OCI-LY7 (cell line): ENCODE measurements at regions of chr4 and their contacts with region 1.

Region 1: DNA sequence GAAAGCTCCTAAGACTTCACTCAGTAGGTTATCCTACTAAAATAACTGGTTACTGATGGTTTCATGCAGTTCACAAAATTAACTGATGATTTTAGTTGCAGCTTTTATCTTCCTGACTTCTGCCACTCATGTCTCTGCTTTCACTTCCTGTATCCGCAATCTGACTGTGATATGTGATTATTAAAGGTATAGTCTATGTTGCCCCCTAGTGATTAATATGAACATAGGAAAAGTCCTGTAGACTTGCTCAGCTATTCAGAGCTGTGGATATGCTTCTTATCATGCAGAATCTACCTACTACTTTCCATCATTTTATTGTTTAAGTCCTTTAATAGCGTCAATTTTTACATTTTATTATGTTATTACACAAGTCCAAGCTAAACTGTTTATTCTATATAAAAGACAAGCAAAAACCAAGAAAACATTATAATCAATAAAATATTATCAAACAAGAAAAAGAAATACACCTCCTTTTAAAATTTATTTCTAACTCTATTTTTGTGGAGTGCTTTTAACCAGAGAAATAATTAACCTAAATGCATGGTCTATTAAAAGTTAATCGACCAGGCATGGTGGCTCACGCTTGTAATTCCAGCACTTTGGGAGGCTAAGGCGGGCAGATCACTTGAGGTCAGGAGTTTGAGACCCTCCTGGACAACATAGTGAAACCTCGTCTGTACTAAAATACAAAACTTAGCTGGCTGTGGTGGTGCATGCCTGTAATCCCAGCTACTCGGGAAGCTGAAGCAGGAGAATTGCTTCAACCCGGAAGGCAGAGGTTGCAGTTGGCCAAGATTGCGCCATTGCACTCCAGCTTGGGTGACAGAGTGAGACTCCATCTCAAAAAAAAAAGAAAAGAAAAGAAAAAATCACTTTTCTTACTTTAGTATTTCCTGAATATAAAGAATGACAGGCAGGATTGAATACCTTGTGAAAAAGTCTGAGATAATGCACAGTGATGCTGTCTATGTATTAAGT is 40.4 kb upstream of the TLR2 start:
- DNase-seq: peak; percentile 92
- H3K4me3 ChIP-seq: no peak overlapping the region
- H3K27ac ChIP-seq: peak overlapping the region; percentile 50
- H3K4me1 ChIP-seq: peaks cover 33% of the 10 kb centered on the region
- CTCF ChIP-seq: peak; percentile 89

Region 2: DNA sequence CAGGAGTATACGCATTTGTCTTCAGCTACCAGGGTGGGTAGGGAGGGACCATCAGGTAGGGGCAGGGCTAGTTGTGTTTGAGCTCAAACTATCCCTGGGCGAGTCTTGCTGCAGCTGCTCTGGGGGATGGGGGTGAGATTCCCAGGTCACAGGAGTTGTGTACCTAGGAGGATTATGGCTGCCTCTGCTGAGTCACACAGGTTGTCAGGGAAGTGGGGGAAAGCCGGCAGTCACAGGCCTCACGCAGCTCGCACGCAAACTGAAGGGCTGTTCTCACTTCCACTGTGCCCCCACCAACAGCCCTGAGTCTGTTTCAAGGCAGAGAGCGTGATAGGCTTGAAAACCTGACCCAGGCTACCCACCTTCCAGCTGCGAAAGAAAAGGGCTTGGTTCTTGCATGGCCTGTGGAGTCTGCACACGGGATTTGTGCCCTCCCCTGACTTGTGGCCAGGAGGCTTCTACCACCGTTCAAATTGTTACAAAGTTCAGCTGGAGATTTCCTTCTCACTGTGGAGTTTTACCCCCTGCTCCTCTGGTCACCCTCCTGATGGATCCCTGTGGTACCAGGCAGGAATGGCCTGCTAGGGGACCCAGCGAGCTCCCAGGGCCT is 800.1 kb before region 1 on chr4:
- CTCF ChIA-PET with region 1: no interaction called
- POLR2A ChIA-PET with region 1: no interaction called
- intact Hi-C with region 1: loop called (anchors 10 kb)
- DNase-seq: no peak
- H3K4me3 ChIP-seq: no peak overlapping the region
- H3K27ac ChIP-seq: no peak overlapping the region
- H3K4me1 ChIP-seq: no peaks in the 10 kb centered on the region
- CTCF ChIP-seq: no peak

Region 3: DNA sequence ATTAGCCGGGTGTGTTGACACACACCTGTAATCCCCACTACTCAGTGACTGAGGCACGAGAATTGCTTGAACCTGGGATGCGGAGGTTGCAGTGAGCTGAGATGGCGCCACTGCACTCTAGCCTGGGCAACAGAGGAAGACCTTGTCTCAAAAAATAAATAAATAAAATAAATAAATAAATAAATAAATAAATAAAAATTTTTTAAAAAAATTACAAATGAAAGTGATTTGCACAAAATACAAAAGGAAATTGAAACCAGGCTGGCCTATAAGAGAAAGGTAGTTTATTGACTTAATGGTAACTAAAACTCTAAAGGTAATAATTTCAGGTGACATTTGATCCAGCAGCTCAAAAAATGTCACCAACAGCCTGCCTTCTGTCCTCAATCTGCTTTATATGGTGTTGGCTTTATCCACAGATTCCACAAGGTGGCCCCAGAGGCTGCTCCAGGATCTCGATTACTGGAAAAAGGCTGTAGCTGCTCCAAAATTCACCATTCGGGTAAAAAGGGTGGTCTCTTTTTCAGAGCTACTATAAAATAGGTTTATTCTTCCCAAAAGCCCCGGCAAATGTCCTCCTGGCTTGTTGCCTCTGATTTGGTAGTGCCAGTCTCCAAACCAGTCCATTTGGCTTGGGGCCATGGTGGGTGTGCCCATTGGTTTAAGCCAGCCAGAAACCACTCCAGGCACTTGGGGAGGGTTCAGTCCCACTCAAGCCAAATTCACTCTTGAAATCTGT is 500.8 kb before region 1 on chr4:
- CTCF ChIA-PET with region 1: no interaction called
- POLR2A ChIA-PET with region 1: interaction called, 3 read pairs
- intact Hi-C with region 1: loop called (anchors 1 kb)
- DNase-seq: peak; percentile 72
- H3K4me3 ChIP-seq: no peak overlapping the region
- H3K27ac ChIP-seq: no peak overlapping the region
- H3K4me1 ChIP-seq: no peaks in the 10 kb centered on the region
- CTCF ChIP-seq: peak; percentile 87

Region 4: GRCh38 chr4:153249199-153250041 is 394.3 kb before region 1 on chr4:
- CTCF ChIA-PET with region 1: no interaction called
- POLR2A ChIA-PET with region 1: no interaction called
- intact Hi-C with region 1: loop called (anchors 10 kb)
- DNase-seq: peak; percentile 90
- H3K4me3 ChIP-seq: peak overlapping the region; percentile 68
- H3K27ac ChIP-seq: no peak overlapping the region
- H3K4me1 ChIP-seq: peaks cover 12% of the 10 kb centered on the region
- CTCF ChIP-seq: peak; percentile 0; the same call in 1 of the 2 replicates

Region 5: DNA sequence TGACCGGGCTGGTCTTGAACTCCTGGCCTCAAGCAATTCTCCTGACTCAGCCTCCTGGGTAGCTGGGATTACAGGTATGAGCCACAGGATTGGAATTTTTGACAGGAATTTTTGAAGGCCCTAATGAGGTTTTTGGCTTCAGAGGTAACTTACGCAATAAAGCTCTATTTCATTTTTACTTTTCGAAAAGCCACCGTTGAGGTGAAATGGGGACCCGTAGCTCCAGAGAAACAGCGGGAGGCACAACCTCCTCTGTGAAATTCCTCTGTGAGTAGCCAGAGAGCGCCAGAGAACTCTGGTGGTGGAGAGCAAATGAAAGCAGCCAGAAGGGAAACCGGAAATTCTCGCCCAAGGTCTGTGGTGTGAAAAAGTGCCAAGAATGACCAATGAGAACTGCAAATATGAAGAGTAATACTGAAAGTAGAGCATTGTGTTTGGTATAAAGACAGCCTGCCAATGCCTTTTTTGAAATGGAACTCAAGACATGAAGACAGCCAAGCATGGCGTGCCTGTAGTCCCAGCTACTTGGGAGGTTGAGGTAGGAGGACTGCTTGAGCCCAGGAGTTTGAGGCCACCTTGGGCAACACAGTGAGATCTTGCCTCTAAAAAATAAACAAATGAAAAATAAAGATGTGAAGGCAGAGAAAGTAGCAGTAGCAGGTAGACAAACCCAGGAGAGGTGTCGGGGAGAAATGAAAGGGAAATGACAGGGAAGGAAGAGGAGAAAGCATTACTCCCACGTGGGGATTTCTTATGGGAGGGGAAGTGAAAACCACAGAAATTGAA is 210.5 kb before region 1 on chr4:
- CTCF ChIA-PET with region 1: interaction called, 3 read pairs
- POLR2A ChIA-PET with region 1: interaction called, 6 read pairs
- intact Hi-C with region 1: loop called (anchors 2 kb)
- DNase-seq: peak; percentile 94
- H3K4me3 ChIP-seq: peak overlapping the region; percentile 60
- H3K27ac ChIP-seq: peak overlapping the region; percentile 94
- H3K4me1 ChIP-seq: peaks cover 99% of the 10 kb centered on the region
- CTCF ChIP-seq: peak; percentile 96